ENCODE measurements at regions of chr7 and their contacts with region 1.

Region 1: DNA sequence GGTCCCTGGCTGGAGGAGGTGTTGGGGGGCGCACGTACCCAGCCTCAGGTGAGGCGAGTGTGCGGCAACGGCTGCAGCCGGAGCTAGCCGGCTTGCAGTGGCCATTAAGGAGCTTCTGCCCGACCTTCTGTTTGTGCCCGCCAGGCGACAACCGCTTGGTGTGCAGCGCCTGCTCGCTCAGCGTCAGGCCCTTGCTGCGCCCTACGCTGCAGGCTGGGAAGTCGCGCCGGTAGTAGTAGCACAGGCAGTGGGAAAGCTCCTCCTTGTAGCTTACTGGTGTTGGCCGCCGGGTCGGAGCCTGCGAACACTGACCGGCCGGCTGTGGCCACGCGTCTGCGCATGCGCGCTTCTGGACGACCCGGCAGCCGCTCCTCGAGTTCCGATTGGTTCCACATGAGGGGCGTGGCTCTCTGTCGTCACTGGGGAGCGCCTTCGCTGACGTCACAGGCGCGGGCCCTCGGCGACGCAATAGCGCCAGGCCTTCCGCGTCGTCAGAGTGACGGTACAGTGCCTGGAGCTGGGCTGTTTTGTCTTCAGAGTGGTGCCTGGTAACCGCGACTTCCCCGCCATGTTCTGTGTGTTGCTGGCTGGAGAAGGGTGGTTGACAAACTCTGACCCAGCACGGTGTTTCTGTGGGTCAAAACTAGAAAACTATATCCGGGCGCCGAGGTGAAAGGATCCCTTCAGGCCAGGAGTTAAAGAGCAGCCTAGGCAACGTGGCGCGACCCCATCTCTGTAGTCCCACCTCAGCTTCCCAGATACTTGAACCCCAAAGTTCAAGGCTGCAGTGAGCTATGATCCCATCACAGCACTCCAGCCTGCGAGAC is 76.3 kb upstream of the TMEM248 start:
- DNase-seq: peak; percentile 99
- ATAC-seq: peak; percentile 92
- H3K4me3 Mint-ChIP-seq: peak overlapping the region; percentile 94
- H3K27ac Mint-ChIP-seq: peak overlapping the region; percentile 100
- H3K4me1 Mint-ChIP-seq: peaks cover 21% of the 10 kb centered on the region
- H3K27me3 Mint-ChIP-seq: no peaks in the 10 kb centered on the region

Region 2: GRCh38 chr7:66859794-66860645 is 15.3 kb after region 1 on chr7:
- CTCF ChIA-PET with region 1: interaction called, 14 read pairs
- POLR2A ChIA-PET with region 1: interaction called, 12 read pairs
- DNase-seq: peak; percentile 35
- ATAC-seq: peak; percentile 62
- H3K4me3 Mint-ChIP-seq: no peak overlapping the region
- H3K27ac Mint-ChIP-seq: peak overlapping the region; percentile 82
- H3K4me1 Mint-ChIP-seq: peaks cover 12% of the 10 kb centered on the region
- H3K27me3 Mint-ChIP-seq: no peaks in the 10 kb centered on the region

Region 3: GRCh38 chr7:66905689-66906088 is 60.9 kb after region 1 on chr7:
- CTCF ChIA-PET with region 1: interaction called, 11 read pairs
- POLR2A ChIA-PET with region 1: interaction called, 5 read pairs
- DNase-seq: no peak
- ATAC-seq: no peak
- H3K4me3 Mint-ChIP-seq: no peak overlapping the region
- H3K27ac Mint-ChIP-seq: no peak overlapping the region
- H3K4me1 Mint-ChIP-seq: no peaks in the 10 kb centered on the region
- H3K27me3 Mint-ChIP-seq: no peaks in the 10 kb centered on the region

Region 4: GRCh38 chr7:66920769-66921395 is 76.1 kb after region 1 on chr7 and contains the start of gene TMEM248:
- CTCF ChIA-PET with region 1: interaction called, 5 read pairs
- POLR2A ChIA-PET with region 1: interaction called, 30 read pairs
- DNase-seq: peak; percentile 93
- ATAC-seq: peak; percentile 88
- H3K4me3 Mint-ChIP-seq: peak within 1 kb of the TSS; percentile 96
- H3K27ac Mint-ChIP-seq: peak within 1 kb of the TSS; percentile 97
- H3K4me1 Mint-ChIP-seq: peaks cover 31% of the 10 kb centered on the region
- H3K27me3 Mint-ChIP-seq: no peaks in the 10 kb centered on the region
- total RNA-seq, gene TMEM248: 80.0 to 91.4 TPM

Measured in activated CD8-positive, alpha-beta T cell treated with anti-CD3 and anti-CD28 coated beads, Interleukin-2, amount 10 ng/mL, durations not matched to agents 7 days and 5 days (primary cell).